ENCODE measurements at regions of chr22 and their contacts with region 1.

Region 1: GRCh38 chr22:46250035-46250782 is at the start of gene CDPF1:
- DNase-seq: peak; percentile 94
- H3K4me3 Mint-ChIP-seq: peak within 1 kb of the TSS; percentile 99
- H3K27ac Mint-ChIP-seq: peak within 1 kb of the TSS; percentile 94
- H3K4me1 Mint-ChIP-seq: peaks cover 11% of the 10 kb centered on the region
- H3K27me3 Mint-ChIP-seq: no peaks in the 10 kb centered on the region
- CTCF ChIP-seq: no peak
- total RNA-seq, gene CDPF1: 10.5 and 11.0 TPM in 2 replicates

Region 2: DNA sequence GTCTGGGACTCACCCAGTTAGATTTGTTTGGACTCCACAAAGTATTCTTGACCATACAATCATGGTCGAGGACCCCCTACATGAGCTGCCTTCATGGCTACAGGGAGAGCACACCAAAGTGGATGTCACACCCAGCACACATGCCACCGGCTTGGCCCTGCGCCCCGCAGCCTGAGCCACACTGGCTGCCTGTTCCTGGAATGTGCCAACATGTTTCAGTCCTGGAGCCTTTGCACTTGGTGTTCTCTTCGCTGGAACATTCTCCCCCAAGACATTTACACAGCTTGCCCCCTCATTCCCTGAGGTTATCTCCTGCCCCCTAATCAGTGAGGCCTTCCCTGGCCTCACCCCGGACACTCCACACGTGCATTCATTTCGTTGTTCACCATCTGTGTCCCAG is 53.9 kb before region 1 on chr22:
- CTCF ChIA-PET with region 1: no interaction called
- intact Hi-C with region 1: loop called (anchors 10 kb)
- DNase-seq: no peak
- H3K4me3 Mint-ChIP-seq: peak overlapping the region; percentile 25
- H3K27ac Mint-ChIP-seq: peak overlapping the region; percentile 34
- H3K4me1 Mint-ChIP-seq: peaks cover 23% of the 10 kb centered on the region
- H3K27me3 Mint-ChIP-seq: no peaks in the 10 kb centered on the region
- CTCF ChIP-seq: no peak

Measured in Calu3 (cell line).